ENCODE measurements at regions of chr5 and their contacts with region 1.

Region 1: GRCh38 chr5:75734913-75735789 is 17.9 kb upstream of the POC5 start:
- DNase-seq: no peak
- ATAC-seq: peak; percentile 98
- H3K4me3 ChIP-seq: no peak overlapping the region
- H3K27ac ChIP-seq: no peak overlapping the region
- H3K4me1 ChIP-seq: no peaks in the 10 kb centered on the region
- H3K27me3 ChIP-seq: peaks cover 8% of the 10 kb centered on the region
- CTCF ChIP-seq: peak; percentile 80

Region 2: GRCh38 chr5:76175051-76175666 is 440.0 kb after region 1 on chr5:
- CTCF ChIA-PET with region 1: interaction called, 9 read pairs
- POLR2A ChIA-PET with region 1: no interaction called
- in situ Hi-C with region 1: no loop called
- intact Hi-C with region 1: loop called (anchors 5 kb)
- DNase-seq: peak; percentile 46
- ATAC-seq: peak; percentile 84
- H3K4me3 ChIP-seq: no peak overlapping the region
- H3K27ac ChIP-seq: no peak overlapping the region
- H3K4me1 ChIP-seq: no peaks in the 10 kb centered on the region
- H3K27me3 ChIP-seq: no peaks in the 10 kb centered on the region
- CTCF ChIP-seq: peak; percentile 90

Region 3: DNA sequence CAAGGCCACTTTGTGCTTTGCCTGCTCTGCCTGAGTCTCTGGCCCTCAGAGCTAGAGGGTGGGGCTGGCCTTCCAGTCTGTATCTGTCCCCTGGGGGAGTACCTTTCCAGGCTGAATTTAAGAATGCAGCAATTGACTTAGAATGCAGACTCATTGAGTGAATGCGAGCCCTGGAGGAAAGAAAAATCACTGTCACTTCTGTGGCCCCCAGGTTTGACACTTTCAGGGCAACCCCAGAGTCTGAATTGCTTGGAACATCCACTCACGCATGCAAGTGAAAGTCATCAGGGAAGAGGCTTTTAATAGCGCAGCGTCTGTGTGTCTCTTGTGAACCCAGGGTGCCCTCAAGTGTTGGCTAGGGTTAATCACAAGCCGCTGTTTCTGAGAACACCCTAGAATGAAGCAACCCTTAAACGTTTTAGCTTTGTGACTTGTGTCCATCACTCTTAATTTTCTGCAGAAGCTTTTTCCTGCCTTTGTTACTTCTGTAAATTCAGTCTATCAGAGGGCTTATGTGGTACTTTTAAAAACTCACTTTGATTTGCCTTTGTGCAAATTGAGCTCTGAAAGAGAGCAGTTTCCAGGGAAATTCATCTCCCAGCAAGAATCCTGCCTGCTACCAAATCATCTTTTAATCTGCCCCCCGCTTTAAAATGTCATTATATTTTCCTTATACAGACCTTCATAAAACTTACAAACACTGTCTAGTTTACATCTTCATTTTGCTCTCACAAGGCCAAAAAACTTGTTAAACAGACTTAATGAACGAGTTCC is 521.2 kb after region 1 on chr5:
- CTCF ChIA-PET with region 1: no interaction called
- POLR2A ChIA-PET with region 1: no interaction called
- in situ Hi-C with region 1: no loop called
- intact Hi-C with region 1: loop called (anchors 2 kb)
- DNase-seq: peak; percentile 42
- ATAC-seq: peak; percentile 97
- H3K4me3 ChIP-seq: no peak overlapping the region
- H3K27ac ChIP-seq: no peak overlapping the region
- H3K4me1 ChIP-seq: no peaks in the 10 kb centered on the region
- H3K27me3 ChIP-seq: peaks cover 17% of the 10 kb centered on the region
- CTCF ChIP-seq: peak; percentile 85